ENCODE measurements at regions of chr19 and their contacts with region 1.

Region 1: DNA sequence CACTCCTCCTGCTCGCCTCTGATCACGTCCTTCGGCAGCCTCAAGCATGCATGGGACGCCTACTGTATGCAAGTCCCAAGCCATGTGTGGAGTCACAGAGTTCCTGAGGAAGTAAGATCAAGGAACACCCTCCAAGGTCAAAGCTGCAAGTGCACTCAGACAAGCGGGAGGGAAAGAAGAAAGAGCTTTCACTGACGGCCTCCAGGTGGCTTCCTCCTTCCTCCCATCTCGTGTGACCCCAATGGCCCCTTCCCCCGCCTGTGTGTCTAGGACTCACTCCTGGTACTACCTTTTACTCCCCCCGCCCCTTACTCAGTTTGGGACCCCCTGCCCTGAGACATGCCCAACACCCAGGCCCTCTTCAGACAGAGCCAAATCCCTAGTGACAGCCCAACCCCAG is 6.0 kb downstream of the HAUS8 start:
- DNase-seq: no peak
- ATAC-seq: no peak

Region 2: GRCh38 chr19:17011485-17011884 is 57.7 kb before region 1 on chr19:
- intact Hi-C with region 1: no loop called
- DNase-seq: no peak
- ATAC-seq: no peak

Region 3: DNA sequence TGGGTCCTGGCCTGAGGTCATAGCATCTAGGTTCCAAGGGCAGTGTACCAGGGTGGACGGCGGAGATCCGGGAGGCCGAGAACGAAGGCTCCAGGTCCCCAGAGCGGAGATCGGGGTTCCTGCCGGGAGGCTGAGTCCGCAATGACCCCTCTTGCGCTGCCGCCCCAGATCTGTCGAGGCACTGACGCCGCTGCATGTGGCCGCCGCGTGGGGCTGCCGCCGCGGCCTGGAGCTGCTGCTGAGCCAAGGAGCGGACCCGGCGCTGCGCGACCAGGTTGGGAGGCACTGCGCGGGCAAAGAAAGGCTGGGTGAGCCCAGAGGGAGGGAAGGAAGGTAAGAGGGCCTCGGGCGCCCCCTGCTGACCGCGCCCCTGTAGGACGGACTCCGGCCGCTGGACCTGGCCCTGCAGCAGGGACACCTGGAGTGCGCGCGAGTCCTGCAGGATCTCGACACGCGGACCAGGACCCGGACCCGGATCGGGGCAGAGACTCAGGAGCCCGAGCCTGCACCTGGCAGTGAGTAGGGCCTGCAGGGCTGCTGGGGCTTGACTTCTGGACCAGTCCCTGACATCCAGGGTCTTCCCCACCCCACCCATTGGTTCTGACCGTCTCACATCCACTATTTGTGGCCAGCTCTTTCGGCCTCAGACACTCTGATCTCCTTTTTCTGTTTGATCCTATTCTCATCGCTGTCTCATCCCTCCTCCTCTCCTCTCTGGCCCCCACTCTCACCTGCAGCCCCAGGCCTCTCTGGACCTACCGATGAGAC is 213.5 kb after region 1 on chr19:
- intact Hi-C with region 1: loop called (anchors 5 kb)
- DNase-seq: peak; percentile 88
- ATAC-seq: peak; percentile 93